PC-9 (cell line): ENCODE measurements at regions of chr15 and their contacts with region 1.

Region 1: DNA sequence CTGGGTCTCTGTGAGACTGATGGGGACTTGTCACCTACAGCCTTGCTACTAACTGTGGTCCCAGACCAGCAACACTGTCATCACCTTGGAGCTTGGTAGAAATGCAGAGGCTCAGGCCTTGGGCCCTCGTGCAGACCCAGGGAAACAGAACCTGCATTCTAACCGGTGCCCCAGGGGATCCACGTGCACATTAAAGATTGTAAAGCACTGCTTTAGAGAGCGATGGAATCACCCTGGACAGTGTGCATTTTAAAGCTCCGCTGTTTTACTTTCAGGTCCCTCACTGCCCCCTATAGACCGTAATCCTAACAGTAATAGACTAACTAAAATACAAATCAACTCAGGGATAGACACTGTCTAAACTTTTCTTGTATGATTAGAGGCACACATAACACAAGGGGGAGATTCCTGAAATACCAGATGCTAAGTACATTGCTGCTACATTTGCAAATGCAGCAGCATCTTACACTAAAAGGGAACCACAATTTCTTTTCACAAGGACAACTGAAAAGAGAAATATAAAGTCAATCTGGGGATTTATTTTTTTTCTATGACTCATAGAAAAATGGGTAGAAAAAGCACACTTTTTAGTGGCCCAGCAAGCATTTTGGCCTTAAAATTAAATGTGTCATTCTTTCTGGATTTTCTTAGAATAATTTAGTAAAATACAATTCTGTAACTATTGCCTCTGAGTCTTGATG is 10.5 kb upstream of the SH3GL3 start:
- DNase-seq: no peak
- H3K4me3 ChIP-seq: no peak overlapping the region
- H3K27ac ChIP-seq: no peak overlapping the region
- H3K4me1 ChIP-seq: no peaks in the 10 kb centered on the region
- H3K27me3 ChIP-seq: no peaks in the 10 kb centered on the region
- CTCF ChIP-seq: peak; percentile 59

Region 2: DNA sequence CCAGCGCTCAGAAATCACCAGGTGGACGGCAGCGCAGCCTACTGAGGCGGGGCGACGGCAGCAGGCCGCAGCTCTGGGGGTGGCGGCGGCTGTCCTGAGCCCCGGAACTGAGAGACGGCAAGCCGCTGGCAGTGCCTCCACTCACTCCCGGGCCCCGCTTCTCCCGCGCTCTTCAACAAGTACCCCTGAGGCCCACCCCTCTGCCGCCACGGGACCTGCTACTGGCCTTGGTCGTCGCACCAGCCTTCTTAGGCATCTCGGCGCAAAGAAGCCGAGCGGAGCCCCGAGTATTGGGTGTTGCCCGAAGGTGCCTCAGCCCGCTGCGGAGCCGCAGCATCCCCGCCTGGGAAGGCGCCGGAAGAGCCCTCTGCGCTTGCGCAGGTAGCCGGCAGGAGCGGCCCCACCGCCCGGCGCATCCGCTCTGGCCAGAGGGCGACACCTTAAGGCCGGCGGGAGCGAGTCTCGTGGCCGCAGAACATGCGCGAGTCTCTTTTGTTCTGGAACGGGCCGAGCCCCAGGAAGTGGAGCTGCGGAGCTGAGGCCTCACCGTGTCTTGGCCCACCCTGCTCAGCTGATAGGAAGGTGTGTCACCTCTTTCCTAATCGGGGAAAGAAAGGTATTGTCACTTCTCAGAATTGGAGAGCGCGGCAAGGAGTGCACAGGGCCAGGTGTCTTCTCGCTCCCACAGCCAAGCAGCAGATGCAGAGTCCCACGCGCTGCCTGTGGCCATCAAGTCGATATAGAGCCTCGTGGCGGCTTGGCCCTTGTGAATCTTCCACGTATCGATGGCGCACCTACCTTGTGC is 425.1 kb before region 1 on chr15 and contains the start of gene C15orf40:
- CTCF ChIA-PET with region 1: no interaction called
- POLR2A ChIA-PET with region 1: no interaction called
- intact Hi-C with region 1: loop called (anchors 2 kb)
- DNase-seq: peak; percentile 79 to 89
- H3K4me3 ChIP-seq: peak within 1 kb of the TSS; percentile 92
- H3K27ac ChIP-seq: peak within 1 kb of the TSS; percentile 43
- H3K4me1 ChIP-seq: peaks cover 15% of the 10 kb centered on the region
- H3K27me3 ChIP-seq: no peaks in the 10 kb centered on the region
- CTCF ChIP-seq: 0 out of 2 replicates have a peak, but pooled peaks have one; percentile 33
- total RNA-seq, gene C15orf40: 21.2 and 27.8 TPM in 2 replicates

Region 3: GRCh38 chr15:83248151-83249029 is 188.2 kb before region 1 on chr15:
- CTCF ChIA-PET with region 1: interaction called, 35 read pairs
- POLR2A ChIA-PET with region 1: no interaction called
- intact Hi-C with region 1: loop called (anchors 1 kb)
- DNase-seq: peak; percentile 34 to 55
- H3K4me3 ChIP-seq: no peak overlapping the region
- H3K27ac ChIP-seq: peak overlapping the region; percentile 7; the same call in 1 of the 2 replicates
- H3K4me1 ChIP-seq: peaks cover 17% of the 10 kb centered on the region
- H3K27me3 ChIP-seq: no peaks in the 10 kb centered on the region
- CTCF ChIP-seq: peak; percentile 98

Region 4: GRCh38 chr15:83559310-83559966 is 122.8 kb after region 1 on chr15:
- CTCF ChIA-PET with region 1: interaction called, 3 read pairs
- POLR2A ChIA-PET with region 1: no interaction called
- intact Hi-C with region 1: loop called (anchors 1 kb)
- DNase-seq: peak; percentile 47 to 49
- H3K4me3 ChIP-seq: no peak overlapping the region
- H3K27ac ChIP-seq: no peak overlapping the region
- H3K4me1 ChIP-seq: no peaks in the 10 kb centered on the region
- H3K27me3 ChIP-seq: no peaks in the 10 kb centered on the region
- CTCF ChIP-seq: peak; percentile 88

Region 5: GRCh38 chr15:84035399-84035766 is 598.8 kb after region 1 on chr15:
- CTCF ChIA-PET with region 1: no interaction called
- POLR2A ChIA-PET with region 1: no interaction called
- intact Hi-C with region 1: loop called (anchors 10 kb)
- DNase-seq: no peak
- H3K4me3 ChIP-seq: no peak overlapping the region
- H3K27ac ChIP-seq: no peak overlapping the region
- H3K4me1 ChIP-seq: no peaks in the 10 kb centered on the region
- H3K27me3 ChIP-seq: no peaks in the 10 kb centered on the region
- CTCF ChIP-seq: peak; percentile 47